Naive thymus-derived CD4-positive, alpha-beta T cell (primary cell): ENCODE measurements at regions of chr11 and their contacts with region 1.

Region 1: DNA sequence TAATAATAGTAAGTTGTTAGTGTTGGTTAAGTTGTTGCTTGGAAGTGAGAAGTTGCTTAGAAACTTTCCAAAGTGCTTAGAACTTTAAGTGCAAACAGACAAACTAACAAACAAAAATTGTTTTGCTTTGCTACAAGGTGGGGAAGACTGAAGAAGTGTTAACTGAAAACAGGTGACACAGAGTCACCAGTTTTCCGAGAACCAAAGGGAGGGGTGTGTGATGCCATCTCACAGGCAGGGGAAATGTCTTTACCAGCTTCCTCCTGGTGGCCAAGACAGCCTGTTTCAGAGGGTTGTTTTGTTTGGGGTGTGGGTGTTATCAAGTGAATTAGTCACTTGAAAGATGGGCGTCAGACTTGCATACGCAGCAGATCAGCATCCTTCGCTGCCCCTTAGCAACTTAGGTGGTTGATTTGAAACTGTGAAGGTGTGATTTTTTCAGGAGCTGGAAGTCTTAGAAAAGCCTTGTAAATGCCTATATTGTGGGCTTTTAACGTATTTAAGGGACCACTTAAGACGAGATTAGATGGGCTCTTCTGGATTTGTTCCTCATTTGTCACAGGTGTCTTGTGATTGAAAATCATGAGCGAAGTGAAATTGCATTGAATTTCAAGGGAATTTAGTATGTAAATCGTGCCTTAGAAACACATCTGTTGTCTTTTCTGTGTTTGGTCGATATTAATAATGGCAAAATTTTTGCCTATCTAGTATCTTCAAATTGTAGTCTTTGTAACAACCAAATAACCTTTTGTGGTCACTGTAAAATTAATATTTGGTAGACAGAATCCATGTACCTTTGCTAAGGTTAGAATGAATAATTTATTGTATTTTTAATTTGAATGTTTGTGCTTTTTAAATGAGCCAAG is 2.7 kb downstream of the NEAT1 start:
- DNase-seq: peak in 8 of 9 donors; percentile 75 to 98 (median 94)
- ATAC-seq: peak; percentile 56
- H3K4me3 ChIP-seq: peak overlapping the region; percentile 74
- H3K4me3 Mint-ChIP-seq: peak overlapping the region; percentile 92 to 100 (median 97)
- H3K27ac ChIP-seq: peak overlapping the region; percentile 98
- H3K27ac Mint-ChIP-seq: peak overlapping the region; percentile 97 to 100 (median 99)
- H3K4me1 ChIP-seq: peaks cover 45 to 46% of the 10 kb centered on the region in 2 donors
- H3K4me1 Mint-ChIP-seq: peaks cover 42 to 79% (median 50%) of the 10 kb centered on the region in 7 donors
- H3K27me3 ChIP-seq: no peaks in the 10 kb centered on the region
- H3K27me3 Mint-ChIP-seq: peaks cover 0 to 32% (median 0%) of the 10 kb centered on the region in 5 donors

Region 2: DNA sequence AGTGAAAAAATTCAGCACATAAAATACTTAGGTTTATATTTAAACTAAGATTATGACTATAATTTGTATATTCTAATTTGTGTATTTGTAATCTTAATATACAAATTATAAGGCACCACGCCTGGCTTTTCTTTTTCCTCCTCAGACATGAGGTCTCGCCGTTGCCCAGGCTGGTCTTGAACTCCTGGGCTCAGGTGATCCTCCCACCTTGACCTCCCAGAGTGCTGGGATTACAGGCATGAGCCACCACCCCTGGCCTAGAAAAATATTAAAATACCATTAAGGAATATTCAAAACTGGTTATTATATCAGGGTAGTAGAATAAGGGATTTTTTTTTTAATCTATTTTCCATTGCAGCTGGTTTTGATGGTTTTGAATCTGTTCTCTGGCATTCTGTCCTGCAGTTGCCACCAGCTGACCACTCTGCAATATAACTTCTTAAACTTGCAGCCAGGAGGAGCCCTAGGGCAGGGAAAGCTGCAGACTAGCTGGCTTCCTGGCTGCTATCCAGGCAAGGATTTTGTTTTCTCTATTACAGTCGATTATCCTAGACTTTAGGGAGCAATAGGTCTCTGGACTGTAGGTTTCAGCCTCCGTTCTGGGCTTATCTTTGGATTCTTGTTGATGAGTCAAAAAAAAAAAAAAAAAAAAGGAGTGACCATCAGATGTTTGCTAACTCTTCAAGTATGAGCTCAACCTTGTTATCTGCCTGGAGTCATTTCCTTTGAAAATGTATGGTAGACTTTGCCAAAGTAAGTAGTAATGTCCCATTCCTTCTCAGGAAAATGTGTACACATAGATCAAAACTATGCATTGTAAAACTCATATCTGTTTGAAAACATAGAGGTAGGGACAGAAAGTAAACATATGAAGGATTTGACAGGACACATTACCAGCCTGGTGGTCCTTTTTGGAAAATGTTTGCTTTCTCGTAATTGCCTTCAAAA is 150.3 kb before region 1 on chr11:
- CTCF ChIA-PET with region 1: no interaction called
- POLR2A ChIA-PET with region 1: no interaction called
- intact Hi-C with region 1: no loop called
- DNase-seq: peak in 5 of 9 donors; percentile 22 to 31 (median 24)
- ATAC-seq: peak; percentile 78
- H3K4me3 ChIP-seq: no peak overlapping the region
- H3K4me3 Mint-ChIP-seq: no peak overlapping the region
- H3K27ac ChIP-seq: no peak overlapping the region
- H3K27ac Mint-ChIP-seq: no peak overlapping the region
- H3K4me1 ChIP-seq: no peaks in the 10 kb centered on the region
- H3K4me1 Mint-ChIP-seq: peaks cover 0 to 21% (median 4%) of the 10 kb centered on the region in 7 donors
- H3K27me3 ChIP-seq: no peaks in the 10 kb centered on the region
- H3K27me3 Mint-ChIP-seq: no peaks in the 10 kb centered on the region

Region 3: GRCh38 chr11:65477149-65477965 is 52.0 kb after region 1 on chr11:
- CTCF ChIA-PET with region 1: interaction called, 7 read pairs
- POLR2A ChIA-PET with region 1: interaction called, 168 read pairs
- intact Hi-C with region 1: loop called (anchors 1 kb)
- DNase-seq: peak; percentile 69 to 96 (median 75)
- ATAC-seq: peak; percentile 94
- H3K4me3 ChIP-seq: peak overlapping the region; percentile 97
- H3K4me3 Mint-ChIP-seq: peak overlapping the region; percentile 87 to 100 (median 96)
- H3K27ac ChIP-seq: peak overlapping the region; percentile 96
- H3K27ac Mint-ChIP-seq: peak overlapping the region; percentile 94 to 100 (median 99)
- H3K4me1 ChIP-seq: peaks cover 6 to 17% of the 10 kb centered on the region in 2 donors
- H3K4me1 Mint-ChIP-seq: peaks cover 8 to 30% (median 14%) of the 10 kb centered on the region in 7 donors
- H3K27me3 ChIP-seq: no peaks in the 10 kb centered on the region
- H3K27me3 Mint-ChIP-seq: peaks cover 0 to 2% (median 0%) of the 10 kb centered on the region in 5 donors

Region 4: GRCh38 chr11:66934971-66935779 is 1509.8 kb after region 1 on chr11:
- CTCF ChIA-PET with region 1: no interaction called
- POLR2A ChIA-PET with region 1: no interaction called
- intact Hi-C with region 1: no loop called
- DNase-seq: no peak
- ATAC-seq: no peak
- H3K4me3 ChIP-seq: no peak overlapping the region
- H3K4me3 Mint-ChIP-seq: no peak overlapping the region
- H3K27ac ChIP-seq: no peak overlapping the region
- H3K27ac Mint-ChIP-seq: no peak overlapping the region
- H3K4me1 ChIP-seq: no peaks in the 10 kb centered on the region
- H3K4me1 Mint-ChIP-seq: peaks cover 0 to 6% (median 0%) of the 10 kb centered on the region in 7 donors
- H3K27me3 ChIP-seq: no peaks in the 10 kb centered on the region
- H3K27me3 Mint-ChIP-seq: peaks cover 0 to 8% (median 2%) of the 10 kb centered on the region in 5 donors